OCI-LY7 (cell line): ENCODE measurements at regions of chr11 and their contacts with region 1.

Region 1: DNA sequence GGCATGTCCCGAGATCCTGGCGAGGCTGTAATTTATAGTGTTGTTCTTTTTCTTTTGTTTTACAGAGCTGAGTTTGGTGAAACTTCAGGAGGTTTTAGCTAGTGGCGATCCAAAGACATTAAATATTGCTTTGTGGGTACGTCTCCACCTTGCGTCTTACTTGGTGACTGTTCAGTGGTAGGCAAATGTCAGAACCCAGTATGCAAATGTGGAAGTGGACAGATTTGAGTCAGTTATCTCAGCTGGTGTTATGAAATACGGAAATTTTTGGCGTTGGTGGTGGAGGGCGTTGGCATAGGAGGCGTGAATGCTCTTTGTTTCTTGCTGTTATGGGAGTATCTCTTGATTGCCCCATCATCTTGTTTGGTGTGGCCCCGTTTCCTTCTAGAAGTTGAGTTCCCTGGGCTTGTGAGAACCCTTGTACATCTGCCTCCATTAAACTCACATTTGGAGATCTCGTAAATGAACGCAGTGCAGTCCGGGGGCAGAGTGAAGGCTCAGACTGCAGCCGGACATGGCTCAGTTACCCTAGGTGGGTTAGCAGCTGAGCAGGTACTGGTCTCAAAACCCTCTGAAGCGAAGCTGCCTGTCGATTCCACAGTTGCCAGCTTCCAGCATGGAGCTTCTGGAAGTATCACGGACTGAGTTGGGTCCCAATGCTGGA is 39.9 kb downstream of the PTPRJ start:
- DNase-seq: peak; percentile 92
- H3K4me3 ChIP-seq: peak overlapping the region; percentile 66
- H3K27ac ChIP-seq: peak overlapping the region; percentile 92
- H3K4me1 ChIP-seq: peaks cover 99% of the 10 kb centered on the region
- CTCF ChIP-seq: peak; percentile 69

Region 2: GRCh38 chr11:47847892-47848635 is 172.2 kb before region 1 on chr11 and contains the start of gene NUP160:
- CTCF ChIA-PET with region 1: no interaction called
- POLR2A ChIA-PET with region 1: no interaction called
- intact Hi-C with region 1: loop called (anchors 5 kb)
- DNase-seq: peak; percentile 76
- H3K4me3 ChIP-seq: peak within 1 kb of the TSS; percentile 94
- H3K27ac ChIP-seq: peak within 1 kb of the TSS; percentile 59
- H3K4me1 ChIP-seq: peaks cover 50% of the 10 kb centered on the region
- CTCF ChIP-seq: no peak
- total RNA-seq, gene NUP160: 23.9 and 32.0 TPM in 2 replicates

Region 3: GRCh38 chr11:47980245-47981049 is 39.8 kb before region 1 on chr11 and contains the start of gene PTPRJ:
- CTCF ChIA-PET with region 1: interaction called, 9 read pairs
- POLR2A ChIA-PET with region 1: interaction called, 11 read pairs
- intact Hi-C with region 1: loop called (anchors 1 kb)
- DNase-seq: peak; percentile 65
- H3K4me3 ChIP-seq: peak within 1 kb of the TSS; percentile 82
- H3K27ac ChIP-seq: no peak within 1 kb of the TSS
- H3K4me1 ChIP-seq: peaks cover 38% of the 10 kb centered on the region
- CTCF ChIP-seq: no peak
- total RNA-seq, gene PTPRJ: 4.5 and 5.4 TPM in 2 replicates

Region 4: GRCh38 chr11:48043111-48043990 is 23.1 kb after region 1 on chr11:
- CTCF ChIA-PET with region 1: interaction called, 5 read pairs
- POLR2A ChIA-PET with region 1: interaction called, 33 read pairs
- intact Hi-C with region 1: loop called (anchors 1 kb)
- DNase-seq: peak; percentile 91
- H3K4me3 ChIP-seq: peak overlapping the region; percentile 50
- H3K27ac ChIP-seq: peak overlapping the region; percentile 92
- H3K4me1 ChIP-seq: peaks cover 82% of the 10 kb centered on the region
- CTCF ChIP-seq: no peak